GM13977 (cell line): ENCODE measurements at regions of chr1 and their contacts with region 1.

Region 1: DNA sequence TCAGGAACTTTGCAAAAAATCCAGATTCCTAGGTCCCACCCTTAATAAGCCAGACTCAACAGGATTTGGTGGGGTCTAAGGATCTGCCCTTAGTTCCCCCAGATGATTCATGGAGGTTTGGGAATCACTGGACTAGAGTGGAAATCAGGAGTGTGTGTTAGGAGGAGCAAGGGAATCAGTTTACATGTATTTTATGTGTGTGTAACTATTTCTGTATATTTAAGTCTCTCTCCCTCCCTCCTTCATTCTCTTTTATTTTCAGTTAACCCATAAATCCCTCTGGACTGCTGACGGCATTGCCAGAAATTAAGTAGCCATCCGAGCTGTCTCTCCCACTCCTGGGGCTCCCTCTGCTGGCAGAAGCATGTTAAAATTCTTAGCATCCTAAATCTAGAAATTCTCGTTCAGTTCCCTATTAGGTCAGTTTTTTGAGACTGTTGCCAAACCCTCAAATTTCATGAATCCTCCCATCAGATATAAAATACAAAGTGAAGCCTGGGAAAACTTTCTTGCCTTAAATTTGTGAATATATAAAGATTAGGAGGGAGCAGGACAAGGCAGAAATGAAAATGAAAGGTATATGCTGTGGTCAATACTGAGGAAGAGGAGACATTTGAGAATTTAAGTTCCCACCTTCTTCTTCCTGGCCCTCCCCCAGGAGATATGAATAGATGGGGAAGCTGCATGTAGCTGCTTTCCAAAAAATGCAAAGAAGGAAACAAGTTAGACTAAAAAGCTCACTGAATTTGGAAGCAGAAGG is 11.7 kb upstream of the HSD11B1 start:
- DNase-seq: peak; percentile 65
- CTCF ChIP-seq: peak; percentile 81

Region 2: GRCh38 chr1:209576798-209577197 is 116.1 kb before region 1 on chr1:
- in situ Hi-C with region 1: loop called (anchors 10 kb)
- DNase-seq: peak; percentile 75
- CTCF ChIP-seq: peak; percentile 96